Heart right ventricle (tissue), 16 donors: ENCODE measurements at regions of chr6 and their contacts with region 1.

Region 1: GRCh38 chr6:158213925-158214674 is 46.0 kb downstream of the GTF2H5 start:
- DNase-seq: peak; percentile 43 to 56
- ATAC-seq: peak; percentile 81 to 96 (median 88)
- H3K4me3 ChIP-seq: no peak overlapping the region
- H3K27ac ChIP-seq: no peak overlapping the region
- H3K4me1 ChIP-seq: peaks cover 0 to 6% (median 0%) of the 10 kb centered on the region in 9 donors
- H3K27me3 ChIP-seq: no peaks in the 10 kb centered on the region
- CTCF ChIP-seq: peak; percentile 26 to 80 (median 76)

Region 2: DNA sequence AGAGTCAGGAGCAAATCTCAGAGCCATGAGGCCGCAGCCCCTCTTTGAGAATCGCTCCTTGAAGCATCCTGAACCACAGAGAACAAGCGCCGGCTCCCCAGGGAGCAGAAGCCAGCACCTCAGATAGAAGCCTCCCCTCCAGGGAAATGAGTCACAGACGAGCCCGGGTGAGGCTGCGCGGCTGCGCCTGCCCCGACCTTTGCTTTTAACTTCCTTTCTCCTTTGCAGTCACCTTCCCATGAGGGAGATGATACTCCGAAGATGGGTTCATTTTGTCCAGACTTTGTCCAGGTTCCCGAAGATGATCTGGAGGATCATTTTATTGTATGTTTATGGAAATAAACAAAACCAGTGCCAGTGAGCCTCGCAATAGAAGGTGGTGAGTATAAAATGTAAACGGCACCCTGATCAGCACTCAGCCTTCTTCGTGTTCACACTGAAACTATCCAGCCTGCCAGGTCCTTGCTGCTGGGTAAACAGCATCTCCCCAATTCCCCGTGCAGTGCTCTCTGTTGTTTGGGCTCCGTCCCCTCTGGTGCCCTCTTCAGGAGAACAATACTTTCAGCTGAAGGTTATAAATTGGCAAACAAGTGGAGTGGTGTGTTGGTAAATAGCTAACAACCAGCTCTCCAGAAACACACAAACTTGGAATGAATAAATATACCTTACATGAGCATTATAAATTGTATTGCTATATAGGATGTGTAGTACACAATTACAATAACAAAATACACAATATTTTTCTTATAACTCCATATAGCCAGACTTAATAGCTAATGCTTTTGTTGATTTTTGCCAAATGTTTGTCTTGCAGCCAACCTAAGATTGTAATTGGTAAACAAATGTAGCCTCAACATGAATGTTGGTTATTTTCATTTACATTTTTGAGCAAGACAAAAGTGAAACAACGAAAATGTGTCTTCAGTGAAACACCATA is 304.4 kb after region 1 on chr6:
- intact Hi-C with region 1: loop called in 1 of 10 experiments (anchors 2 kb)
- DNase-seq: peak; percentile 38 to 48
- ATAC-seq: peak in 6 of 8 donors; percentile 61 to 80 (median 70)
- H3K4me3 ChIP-seq: peak overlapping the region in 4 of 10 donors; percentile 4 to 28 (median 22)
- H3K27ac ChIP-seq: no peak overlapping the region
- H3K4me1 ChIP-seq: peaks cover 0 to 19% (median 13%) of the 10 kb centered on the region in 9 donors
- H3K27me3 ChIP-seq: peaks cover 0 to 61% (median 45%) of the 10 kb centered on the region in 7 donors
- CTCF ChIP-seq: peak; percentile 5 to 68 (median 53)

Region 3: DNA sequence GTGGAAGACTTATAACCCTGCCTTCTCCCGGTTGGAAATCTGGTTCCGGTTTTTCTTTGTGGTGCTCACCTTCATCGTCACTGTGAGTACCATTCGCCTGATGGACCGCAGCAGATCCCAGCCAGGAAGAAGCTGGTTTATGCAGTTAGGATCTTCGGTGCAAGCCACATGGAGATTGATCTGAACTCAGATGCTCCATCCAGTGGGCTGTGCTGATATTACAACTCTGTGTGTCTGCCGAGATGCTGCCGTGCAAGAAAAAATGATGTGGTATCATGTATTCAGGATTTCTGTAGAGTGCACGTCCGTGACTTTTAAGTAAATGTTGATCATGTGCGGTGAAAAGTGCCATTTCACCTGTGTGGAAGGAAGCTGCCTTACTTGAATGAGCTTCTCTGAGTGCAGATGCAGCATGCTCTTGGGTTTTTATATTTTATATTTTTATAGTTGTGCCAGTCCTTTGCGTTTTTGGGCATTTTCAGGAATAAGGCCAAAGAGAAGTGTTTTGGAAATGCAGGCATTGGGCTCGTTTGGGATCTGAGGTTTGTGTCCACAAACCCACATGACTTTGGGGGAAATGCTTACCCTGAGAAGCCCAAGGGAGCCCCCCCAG is 391.3 kb after region 1 on chr6:
- intact Hi-C with region 1: loop called in 5 of 10 experiments (anchors 2 to 10 kb)
- DNase-seq: peak in 1 of 2 donors; percentile 65
- ATAC-seq: peak in 4 of 8 donors; percentile 53 to 70 (median 66)
- H3K4me3 ChIP-seq: no peak overlapping the region
- H3K27ac ChIP-seq: no peak overlapping the region
- H3K4me1 ChIP-seq: peaks cover 0 to 18% (median 8%) of the 10 kb centered on the region in 9 donors
- H3K27me3 ChIP-seq: no peaks in the 10 kb centered on the region
- CTCF ChIP-seq: peak; percentile 46 to 81 (median 73)

Region 4: DNA sequence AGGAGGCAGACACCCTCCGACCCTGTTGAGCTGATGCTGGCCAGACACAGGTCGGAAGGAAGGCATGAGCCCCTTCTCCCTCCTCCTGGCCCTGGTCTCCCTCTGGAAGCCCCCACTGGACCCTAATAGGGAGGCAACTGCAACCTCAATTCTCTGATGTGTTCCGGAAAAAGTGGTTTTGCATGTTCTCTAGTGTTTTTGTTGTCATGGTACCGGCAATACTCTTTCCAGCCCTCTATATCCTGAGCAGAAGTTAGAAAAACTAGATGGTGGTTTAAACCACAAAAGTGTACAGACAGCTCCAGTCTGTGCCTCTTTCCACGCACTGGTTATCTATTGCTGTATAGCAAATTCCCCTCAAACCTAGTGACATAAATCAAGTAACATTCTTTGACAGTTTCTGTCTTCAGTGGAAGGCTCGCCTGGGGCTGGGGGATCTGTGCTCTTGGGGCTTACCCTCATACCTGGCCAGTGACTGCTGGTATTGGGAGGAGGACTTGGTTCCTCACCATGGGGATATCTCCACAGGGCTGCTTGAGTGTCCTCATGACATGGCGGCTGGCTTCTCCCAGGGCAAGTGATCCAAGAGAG is 472.8 kb after region 1 on chr6:
- intact Hi-C with region 1: loop called in 4 of 10 experiments (anchors 2 to 10 kb)
- DNase-seq: no peak
- ATAC-seq: peak in 5 of 8 donors; percentile 33 to 64 (median 44)
- H3K4me3 ChIP-seq: no peak overlapping the region
- H3K27ac ChIP-seq: peak overlapping the region in 1 of 10 donors; percentile 55
- H3K4me1 ChIP-seq: peaks cover 0 to 36% (median 0%) of the 10 kb centered on the region in 9 donors
- H3K27me3 ChIP-seq: no peaks in the 10 kb centered on the region
- CTCF ChIP-seq: no peak

Region 5: GRCh38 chr6:158697811-158698210 is 483.7 kb after region 1 on chr6:
- intact Hi-C with region 1: loop called in 3 of 10 experiments (anchors 5 to 10 kb)
- DNase-seq: no peak
- ATAC-seq: no peak
- H3K4me3 ChIP-seq: no peak overlapping the region
- H3K27ac ChIP-seq: no peak overlapping the region
- H3K4me1 ChIP-seq: no peaks in the 10 kb centered on the region
- H3K27me3 ChIP-seq: no peaks in the 10 kb centered on the region
- CTCF ChIP-seq: no peak

Region 6: DNA sequence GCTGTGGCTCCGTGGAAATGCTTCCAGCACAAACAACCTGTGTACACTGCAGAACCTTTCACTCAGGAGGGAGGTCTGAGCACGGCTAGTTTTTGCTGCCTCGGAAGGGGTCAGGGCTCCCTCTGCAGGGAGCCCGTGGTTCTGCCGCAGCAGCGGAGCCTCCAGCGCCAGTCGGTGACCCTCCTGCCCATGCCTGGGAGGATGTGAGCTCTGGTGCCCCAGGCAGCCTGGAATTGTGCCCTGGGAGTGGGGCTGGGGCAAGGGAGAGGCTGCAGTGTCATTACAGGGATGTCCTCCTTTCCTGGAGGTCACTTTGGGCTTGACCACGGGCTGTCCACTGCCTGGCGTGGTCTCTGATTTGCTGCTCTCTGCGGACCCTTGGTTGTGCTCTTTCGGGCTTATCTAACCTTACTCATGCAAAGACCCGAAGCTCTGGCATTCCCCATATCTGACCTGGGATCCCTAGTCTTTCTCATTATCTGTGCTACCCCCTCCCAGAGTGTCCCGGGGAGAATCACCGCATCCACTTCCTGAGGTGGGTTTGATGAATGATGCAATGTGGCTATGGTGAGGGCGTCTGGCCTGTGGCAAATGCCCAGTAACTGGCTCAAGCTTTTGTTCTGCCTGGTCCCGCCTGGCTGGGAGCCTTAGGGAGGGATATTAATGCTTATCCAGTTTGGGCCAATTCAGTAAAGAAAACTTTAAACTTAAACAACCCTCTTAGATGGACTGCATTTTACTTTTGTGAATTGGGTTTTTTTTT is 890.2 kb after region 1 on chr6:
- intact Hi-C with region 1: loop called in 1 of 10 experiments (anchors 10 kb)
- DNase-seq: peak; percentile 43 to 62
- ATAC-seq: peak; percentile 79 to 91 (median 86)
- H3K4me3 ChIP-seq: no peak overlapping the region
- H3K27ac ChIP-seq: peak overlapping the region in 1 of 10 donors; percentile 11
- H3K4me1 ChIP-seq: peaks cover 0 to 44% (median 8%) of the 10 kb centered on the region in 9 donors
- H3K27me3 ChIP-seq: peaks cover 0 to 18% (median 0%) of the 10 kb centered on the region in 7 donors
- CTCF ChIP-seq: peak; percentile 39 to 96 (median 82)